ENCODE measurements at regions of chr4 and their contacts with region 1.

Region 1: GRCh38 chr4:72701987-72702819 is 133.2 kb upstream of the ADAMTS3 start:
- DNase-seq: no peak
- H3K4me3 ChIP-seq: peak overlapping the region; percentile 24 to 27
- H3K27ac ChIP-seq: no peak overlapping the region
- H3K4me1 ChIP-seq: no peaks in the 10 kb centered on the region
- H3K27me3 ChIP-seq: no peaks in the 10 kb centered on the region
- CTCF ChIP-seq: peak in 2 of 3 experiments; percentile 18 to 50
- POLR2A ChIP-seq: no peak

Region 2: DNA sequence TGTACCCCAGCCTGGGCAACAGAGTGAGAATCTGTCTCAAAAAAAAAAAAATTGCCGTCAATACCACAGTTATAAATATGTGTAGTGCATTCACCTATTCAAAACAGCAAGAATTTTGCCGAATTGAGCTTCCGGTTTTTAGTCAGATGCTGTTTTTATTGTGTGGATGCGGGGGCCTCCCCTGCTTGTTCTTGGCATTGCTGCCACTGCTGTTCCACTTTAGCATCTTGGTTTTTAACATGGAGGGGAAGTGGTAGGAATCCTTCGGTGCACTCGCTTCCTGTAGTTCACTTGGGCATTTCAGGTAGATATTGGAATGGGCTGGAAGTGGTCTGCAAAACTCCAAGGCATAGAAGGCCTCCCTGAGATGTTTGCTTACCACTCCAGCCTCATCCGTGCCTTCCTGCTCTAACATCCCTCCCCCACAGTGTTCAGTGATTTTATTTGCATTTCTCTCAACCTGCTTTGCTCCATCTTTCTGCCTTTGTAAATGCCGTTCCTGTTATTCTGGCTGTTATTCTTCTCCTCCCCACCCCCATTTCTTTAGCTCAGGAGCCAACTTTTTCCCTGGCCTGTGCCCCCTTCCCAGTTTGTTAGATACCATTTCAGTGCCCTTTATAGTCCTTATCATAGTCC is 1774.6 kb before region 1 on chr4:
- intact Hi-C with region 1: no loop called
- DNase-seq: no peak
- H3K4me3 ChIP-seq: no peak overlapping the region
- H3K27ac ChIP-seq: no peak overlapping the region
- H3K4me1 ChIP-seq: no peaks in the 10 kb centered on the region
- H3K27me3 ChIP-seq: no peaks in the 10 kb centered on the region
- CTCF ChIP-seq: no peak
- POLR2A ChIP-seq: no peak

Region 3: DNA sequence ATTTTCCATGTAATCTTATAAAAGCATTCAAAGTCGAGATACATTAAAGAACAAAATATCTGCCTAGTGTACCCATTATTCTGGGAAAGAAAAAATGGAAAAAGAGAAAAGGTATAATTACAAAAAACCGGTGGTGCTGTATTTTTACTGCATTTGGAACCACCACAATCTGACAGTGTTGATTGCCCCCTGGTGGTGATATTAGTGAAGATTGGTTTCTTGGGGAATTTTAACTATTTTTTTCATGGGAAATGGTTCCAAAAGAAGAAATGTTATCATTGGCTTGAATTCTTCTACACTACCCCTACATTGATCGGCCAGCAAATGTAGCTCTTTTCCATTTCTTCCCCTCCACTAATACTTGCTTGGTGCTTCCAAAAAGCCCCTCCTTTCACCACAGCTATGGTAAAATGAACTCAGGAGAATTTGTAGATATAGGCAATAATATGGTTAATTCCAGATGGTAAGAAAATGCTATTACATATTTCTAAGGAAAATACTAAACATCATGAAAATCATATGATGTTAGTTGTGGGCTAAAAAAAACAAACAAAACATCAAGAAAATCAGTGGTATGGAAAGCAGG is 317.4 kb after region 1 on chr4:
- intact Hi-C with region 1: loop called (anchors 10 kb)
- DNase-seq: no peak
- H3K4me3 ChIP-seq: no peak overlapping the region
- H3K27ac ChIP-seq: no peak overlapping the region
- H3K4me1 ChIP-seq: no peaks in the 10 kb centered on the region
- H3K27me3 ChIP-seq: no peaks in the 10 kb centered on the region
- CTCF ChIP-seq: peak; percentile 51 to 55 (median 55)
- POLR2A ChIP-seq: no peak

Measured in vagina (tissue), 2 donors.